Natural killer cell (primary cell): ENCODE measurements at regions of chr9 and their contacts with region 1.

Region 1: DNA sequence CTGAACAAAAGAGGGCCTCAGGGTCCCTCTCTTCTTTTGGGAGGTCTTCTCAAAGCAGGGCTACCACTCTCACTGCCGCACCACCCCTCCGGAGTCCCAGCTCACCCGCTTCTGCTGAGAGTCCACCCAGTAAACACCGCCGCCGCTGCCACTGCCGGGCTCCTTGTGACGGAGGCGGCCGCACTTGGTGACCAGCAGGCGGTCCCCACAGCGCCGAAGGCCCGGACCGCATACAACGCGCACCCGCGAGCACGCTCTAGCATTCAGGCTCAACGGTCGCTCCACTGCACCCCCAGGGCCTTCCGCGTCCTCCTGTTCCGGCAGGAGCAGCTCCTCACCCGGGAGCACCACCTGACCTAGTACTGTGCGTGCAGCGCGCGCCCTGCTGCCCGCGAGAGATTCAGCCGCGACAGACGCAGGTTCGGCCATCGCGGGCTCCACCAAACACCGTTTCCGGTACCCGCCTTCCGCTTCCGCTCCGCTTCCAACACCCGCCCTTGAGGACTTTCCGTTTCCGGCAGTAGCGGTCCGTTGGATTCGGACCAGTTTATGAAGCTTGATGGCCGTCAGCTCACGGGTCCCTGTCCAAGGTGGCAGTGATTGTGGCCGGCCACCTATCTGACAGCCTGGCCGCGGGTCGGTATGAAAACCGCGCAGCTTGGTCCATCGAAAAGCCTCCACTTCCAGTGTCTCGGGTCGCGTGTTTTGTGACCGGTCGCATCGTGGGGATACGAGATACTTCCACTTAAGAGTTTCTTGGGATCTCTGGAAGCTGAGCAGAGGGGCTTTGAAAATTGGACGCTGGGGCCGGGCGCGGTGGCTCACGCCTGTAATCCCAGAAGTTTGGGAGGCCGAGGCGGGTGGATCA is at the start of gene EXOSC3:
- DNase-seq: peak; percentile 81 to 92
- ATAC-seq: peak; percentile 89 to 92 (median 92)
- H3K4me3 ChIP-seq: peak within 1 kb of the TSS; percentile 94
- H3K4me3 Mint-ChIP-seq: peak within 1 kb of the TSS; percentile 98
- H3K27ac ChIP-seq: peak within 1 kb of the TSS; percentile 79
- H3K27ac Mint-ChIP-seq: peak within 1 kb of the TSS; percentile 96 to 99
- H3K4me1 ChIP-seq: peaks cover 11% of the 10 kb centered on the region
- H3K4me1 Mint-ChIP-seq: peaks cover 35 to 40% of the 10 kb centered on the region in 2 donors
- H3K27me3 ChIP-seq: no peaks in the 10 kb centered on the region
- H3K27me3 Mint-ChIP-seq: peaks cover 0 to 2% of the 10 kb centered on the region in 2 donors
- CTCF ChIP-seq: no peak
- total RNA-seq, gene EXOSC3: 20.3 to 42.7 (median 24.5) TPM

Region 2: GRCh38 chr9:37693260-37693659 is 91.6 kb before region 1 on chr9:
- intact Hi-C with region 1: no loop called
- DNase-seq: no peak
- ATAC-seq: no peak
- H3K4me3 ChIP-seq: no peak overlapping the region
- H3K4me3 Mint-ChIP-seq: no peak overlapping the region
- H3K27ac ChIP-seq: no peak overlapping the region
- H3K27ac Mint-ChIP-seq: no peak overlapping the region
- H3K4me1 ChIP-seq: no peaks in the 10 kb centered on the region
- H3K4me1 Mint-ChIP-seq: no peaks in the 10 kb centered on the region
- H3K27me3 ChIP-seq: peaks cover 5% of the 10 kb centered on the region
- H3K27me3 Mint-ChIP-seq: peaks cover 36 to 41% of the 10 kb centered on the region in 2 donors
- CTCF ChIP-seq: no peak

Region 3: GRCh38 chr9:37800631-37801286 is 15.9 kb after region 1 on chr9 and contains the start of gene DCAF10:
- intact Hi-C with region 1: loop called (anchors 1 kb)
- DNase-seq: peak; percentile 91 to 92
- ATAC-seq: peak; percentile 88 to 94 (median 89)
- H3K4me3 ChIP-seq: peak within 1 kb of the TSS; percentile 89
- H3K4me3 Mint-ChIP-seq: peak within 1 kb of the TSS; percentile 92
- H3K27ac ChIP-seq: peak within 1 kb of the TSS; percentile 79
- H3K27ac Mint-ChIP-seq: peak within 1 kb of the TSS; percentile 80 to 87
- H3K4me1 ChIP-seq: peaks cover 17% of the 10 kb centered on the region
- H3K4me1 Mint-ChIP-seq: peaks cover 20 to 30% of the 10 kb centered on the region in 2 donors
- H3K27me3 ChIP-seq: no peaks in the 10 kb centered on the region
- H3K27me3 Mint-ChIP-seq: no peaks in the 10 kb centered on the region
- CTCF ChIP-seq: no peak
- total RNA-seq, gene DCAF10: 12.9 to 21.0 (median 18.5) TPM

Region 4: DNA sequence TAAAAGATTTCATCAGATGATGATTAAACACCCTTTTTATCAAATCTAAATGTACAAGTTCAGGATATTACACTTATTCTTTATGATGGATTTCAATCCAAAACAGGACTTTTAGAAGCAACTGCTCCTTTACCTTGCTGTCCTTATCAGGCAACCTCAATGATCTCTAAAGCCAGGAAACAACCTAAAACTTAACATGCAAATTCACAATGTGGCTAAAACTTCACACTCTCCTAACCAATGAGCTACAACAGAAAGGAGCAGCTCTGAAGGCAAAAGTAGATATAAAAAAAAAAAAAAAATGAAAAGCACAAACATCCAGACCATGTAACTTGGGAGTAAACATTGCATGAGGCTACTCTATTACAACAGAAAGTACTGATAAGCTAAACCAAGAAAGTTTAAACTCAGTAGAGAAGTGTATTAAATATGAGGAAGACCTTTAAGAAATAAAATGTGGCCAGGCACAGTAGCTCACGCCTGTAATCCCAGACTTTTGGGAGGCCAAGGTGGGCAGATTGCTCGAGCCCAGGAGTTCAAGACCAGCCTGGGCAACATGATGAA is 96.1 kb after region 1 on chr9:
- intact Hi-C with region 1: no loop called
- DNase-seq: no peak
- ATAC-seq: peak in 1 of 3 donors; percentile 45
- H3K4me3 ChIP-seq: no peak overlapping the region
- H3K4me3 Mint-ChIP-seq: no peak overlapping the region
- H3K27ac ChIP-seq: no peak overlapping the region
- H3K27ac Mint-ChIP-seq: peak overlapping the region; percentile 6 to 45
- H3K4me1 ChIP-seq: no peaks in the 10 kb centered on the region
- H3K4me1 Mint-ChIP-seq: peaks cover 10 to 11% of the 10 kb centered on the region in 2 donors
- H3K27me3 ChIP-seq: no peaks in the 10 kb centered on the region
- H3K27me3 Mint-ChIP-seq: no peaks in the 10 kb centered on the region
- CTCF ChIP-seq: no peak